ENCODE measurements at regions of chr2 and their contacts with region 1.

Region 1: DNA sequence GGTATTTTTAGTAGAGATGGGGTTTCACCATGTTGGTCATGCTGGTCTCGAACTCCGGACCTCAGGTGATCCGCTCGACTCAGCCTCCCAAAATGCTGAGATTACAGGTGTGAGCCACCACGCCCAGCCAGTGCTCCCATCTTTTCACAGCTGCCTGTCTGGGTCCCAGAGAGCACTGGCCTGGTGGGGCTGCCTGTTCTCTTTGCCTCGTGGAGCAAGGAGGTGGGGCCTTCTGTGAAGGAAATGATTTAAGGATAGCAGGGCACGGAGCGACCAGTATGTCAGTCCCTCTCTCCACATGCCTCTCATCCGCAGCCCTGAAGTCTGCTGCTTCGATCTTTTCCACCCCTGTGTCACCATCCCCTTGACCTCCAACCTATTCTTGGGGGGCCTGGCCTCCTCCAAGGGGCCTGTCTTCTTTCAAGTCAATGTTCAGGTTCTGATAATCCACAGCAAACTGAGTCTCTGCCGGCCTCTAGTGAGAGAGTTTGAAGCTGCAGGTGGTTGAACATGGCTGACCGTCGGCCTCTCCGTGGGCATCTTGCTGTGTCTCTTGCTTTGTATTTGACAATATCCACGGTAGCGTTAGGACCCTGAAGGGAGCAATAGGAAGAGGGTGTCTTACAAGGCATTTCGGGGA is 28.2 kb upstream of the GIGYF2 start:
- DNase-seq: peak in 1 of 2 experiments; percentile 21
- H3K4me3 ChIP-seq: no peak overlapping the region
- H3K27ac ChIP-seq: no peak overlapping the region
- H3K4me1 ChIP-seq: no peaks in the 10 kb centered on the region
- H3K27me3 ChIP-seq: no peaks in the 10 kb centered on the region
- CTCF ChIP-seq: peak; percentile 40 to 71 (median 69)
- EP300 ChIP-seq: no peak
- POLR2A ChIP-seq: no peak
- RAD21 ChIP-seq: peak; percentile 74 to 80

Region 2: GRCh38 chr2:232604535-232604934 is 64.4 kb before region 1 on chr2:
- CTCF ChIA-PET with region 1: interaction called, 58 read pairs
- POLR2A ChIA-PET with region 1: no interaction called
- DNase-seq: no peak
- H3K4me3 ChIP-seq: no peak overlapping the region
- H3K27ac ChIP-seq: no peak overlapping the region
- H3K4me1 ChIP-seq: peaks cover 0 to 2% (median 0%) of the 10 kb centered on the region in 4 experiments; a peak in 1 of 7 replicates
- H3K27me3 ChIP-seq: no peaks in the 10 kb centered on the region; a peak in 1 of 7 replicates
- CTCF ChIP-seq: no peak
- EP300 ChIP-seq: no peak
- POLR2A ChIP-seq: no peak
- RAD21 ChIP-seq: no peak

Region 3: DNA sequence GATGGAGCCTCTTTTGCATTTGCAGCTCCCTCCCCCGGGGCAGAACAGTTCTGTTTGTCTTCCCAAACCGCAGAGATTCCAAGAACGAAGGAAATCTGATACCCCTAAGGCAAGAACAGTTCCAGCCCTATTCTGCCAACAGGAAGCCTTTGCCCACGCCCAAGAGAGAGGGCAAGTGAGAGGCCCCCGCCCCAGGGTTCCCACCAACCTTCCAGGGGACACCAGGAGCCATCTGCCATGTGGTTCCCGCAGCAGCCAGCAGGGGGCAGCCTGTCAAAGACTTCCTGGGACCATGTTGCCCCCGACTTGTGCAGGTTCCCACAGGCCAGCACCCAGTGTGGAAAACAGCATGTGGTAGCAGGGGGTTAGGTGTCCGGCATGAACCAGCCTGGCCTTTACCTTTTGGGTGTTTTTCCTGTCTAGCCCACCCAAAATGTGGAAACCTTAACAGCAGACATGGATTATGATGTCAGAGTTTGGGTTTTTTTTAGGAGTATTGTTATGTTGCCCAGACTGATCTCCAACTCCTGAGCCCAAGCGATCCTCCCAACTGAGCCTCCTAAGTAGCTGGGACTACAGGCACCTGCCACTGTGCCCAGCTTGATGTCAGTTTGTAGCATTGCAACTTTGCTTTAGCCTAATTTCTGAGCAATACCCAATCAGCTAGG is 57.2 kb before region 1 on chr2:
- CTCF ChIA-PET with region 1: interaction called, 58 read pairs
- POLR2A ChIA-PET with region 1: no interaction called
- DNase-seq: peak in 1 of 2 experiments; percentile 96
- H3K4me3 ChIP-seq: no peak overlapping the region
- H3K27ac ChIP-seq: no peak overlapping the region
- H3K4me1 ChIP-seq: no peaks in the 10 kb centered on the region
- H3K27me3 ChIP-seq: no peaks in the 10 kb centered on the region
- CTCF ChIP-seq: peak; percentile 76 to 92 (median 84)
- EP300 ChIP-seq: no peak
- POLR2A ChIP-seq: no peak
- RAD21 ChIP-seq: peak; percentile 58 to 72

Region 4: GRCh38 chr2:232623783-232624727 is 44.9 kb before region 1 on chr2:
- CTCF ChIA-PET with region 1: interaction called, 14 read pairs
- POLR2A ChIA-PET with region 1: no interaction called
- DNase-seq: no peak
- H3K4me3 ChIP-seq: no peak overlapping the region
- H3K27ac ChIP-seq: no peak overlapping the region
- H3K4me1 ChIP-seq: peaks cover 0 to 2% (median 0%) of the 10 kb centered on the region in 4 experiments; a peak in 2 of 7 replicates
- H3K27me3 ChIP-seq: 0 out of 7 replicates have a peak, but pooled peaks cover 0 to 2% (median 0%) of the 10 kb centered on the region in 4 experiments
- CTCF ChIP-seq: no peak
- EP300 ChIP-seq: no peak
- POLR2A ChIP-seq: no peak
- RAD21 ChIP-seq: no peak

Region 5: GRCh38 chr2:232687382-232688160 is 18.6 kb after region 1 on chr2:
- CTCF ChIA-PET with region 1: interaction called, 37 read pairs
- POLR2A ChIA-PET with region 1: no interaction called
- DNase-seq: no peak
- H3K4me3 ChIP-seq: no peak overlapping the region
- H3K27ac ChIP-seq: no peak overlapping the region
- H3K4me1 ChIP-seq: no peaks in the 10 kb centered on the region
- H3K27me3 ChIP-seq: no peaks in the 10 kb centered on the region
- CTCF ChIP-seq: no peak
- EP300 ChIP-seq: no peak
- POLR2A ChIP-seq: no peak
- RAD21 ChIP-seq: no peak

Region 6: DNA sequence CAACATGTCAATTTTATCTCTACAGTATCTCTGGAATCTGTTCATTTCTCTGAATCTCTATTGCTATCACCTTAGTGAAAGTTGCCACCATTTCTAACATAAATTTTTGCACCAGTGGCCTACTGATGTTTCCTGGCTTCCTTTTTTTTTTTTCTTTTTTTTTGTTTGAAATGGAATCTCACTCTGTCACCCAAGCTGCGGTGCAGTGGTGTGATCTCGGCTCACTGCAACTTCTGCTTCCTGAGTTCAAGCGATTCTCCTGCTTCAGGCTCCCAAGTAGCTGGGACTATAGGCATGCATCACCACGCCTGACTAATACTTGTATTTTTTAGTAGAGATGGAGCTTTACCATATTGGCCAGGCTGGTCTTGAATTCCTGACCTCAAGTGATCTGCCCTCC is 72.4 kb after region 1 on chr2:
- CTCF ChIA-PET with region 1: no interaction called
- POLR2A ChIA-PET with region 1: no interaction called
- DNase-seq: no peak
- H3K4me3 ChIP-seq: no peak overlapping the region
- H3K27ac ChIP-seq: no peak overlapping the region
- H3K4me1 ChIP-seq: no peaks in the 10 kb centered on the region
- H3K27me3 ChIP-seq: no peaks in the 10 kb centered on the region
- CTCF ChIP-seq: no peak
- EP300 ChIP-seq: no peak
- POLR2A ChIP-seq: no peak
- RAD21 ChIP-seq: no peak

Measured in H1 (cell line).